ENCODE measurements at regions of chr2 and their contacts with region 1.

Region 1: GRCh38 chr2:164560181-164560792 is 61.0 kb downstream of the GRB14 start:
- DNase-seq: no peak
- ATAC-seq: no peak

Region 2: DNA sequence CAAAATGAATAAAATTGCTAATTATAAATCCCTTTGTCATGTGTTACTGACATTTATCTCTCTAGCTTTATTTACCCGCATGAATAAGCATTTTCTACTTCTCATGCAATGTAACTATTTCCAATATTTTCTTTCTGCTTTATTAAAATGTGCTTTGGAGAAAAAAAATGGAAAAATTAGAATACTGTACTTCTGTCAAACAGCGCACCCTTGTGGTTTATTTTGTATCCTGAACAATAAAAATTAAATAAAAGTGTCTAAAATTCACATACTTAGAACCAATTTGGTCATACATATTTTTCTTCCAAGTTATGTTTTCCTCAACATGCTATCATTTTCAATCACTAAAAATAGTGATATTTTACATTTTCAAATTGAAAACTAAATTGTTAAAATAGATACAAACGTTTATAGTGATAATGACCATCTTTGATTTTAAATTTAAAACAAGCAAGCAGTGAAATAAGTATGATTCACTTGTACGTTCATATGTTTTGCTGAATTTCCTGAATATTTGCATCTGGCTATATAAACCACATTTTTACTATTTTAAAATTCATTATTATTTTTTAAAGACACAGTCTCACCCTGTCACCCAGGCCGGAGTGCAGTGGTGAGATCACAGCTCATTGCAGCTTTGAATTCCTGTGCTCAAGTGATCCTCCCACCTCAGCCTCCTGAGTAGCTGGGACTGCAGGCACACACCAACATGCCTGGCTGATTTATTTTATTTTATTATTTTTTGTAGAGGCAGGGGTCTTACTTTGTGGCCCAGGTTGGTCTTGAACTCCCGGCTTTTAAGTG is 156.9 kb after region 1 on chr2:
- intact Hi-C with region 1: loop called (anchors 10 kb)
- DNase-seq: no peak
- ATAC-seq: no peak

Measured in left ventricle myocardium superior (tissue), 1 donor.